ENCODE measurements at regions of chr19 and their contacts with region 1.

Region 1: GRCh38 chr19:54245936-54246335 is 3.3 kb upstream of the LILRA6 start:
- DNase-seq: no peak
- ATAC-seq: no peak
- H3K4me3 ChIP-seq: no peak overlapping the region
- H3K4me3 Mint-ChIP-seq: no peak overlapping the region
- H3K27ac ChIP-seq: no peak overlapping the region
- H3K27ac Mint-ChIP-seq: no peak overlapping the region
- H3K4me1 ChIP-seq: peaks cover 0 to 9% of the 10 kb centered on the region in 2 donors
- H3K4me1 Mint-ChIP-seq: peaks cover 7 to 12% (median 11%) of the 10 kb centered on the region in 7 donors
- H3K27me3 ChIP-seq: no peaks in the 10 kb centered on the region
- H3K27me3 Mint-ChIP-seq: peaks cover 0 to 6% (median 0%) of the 10 kb centered on the region in 5 donors

Region 2: DNA sequence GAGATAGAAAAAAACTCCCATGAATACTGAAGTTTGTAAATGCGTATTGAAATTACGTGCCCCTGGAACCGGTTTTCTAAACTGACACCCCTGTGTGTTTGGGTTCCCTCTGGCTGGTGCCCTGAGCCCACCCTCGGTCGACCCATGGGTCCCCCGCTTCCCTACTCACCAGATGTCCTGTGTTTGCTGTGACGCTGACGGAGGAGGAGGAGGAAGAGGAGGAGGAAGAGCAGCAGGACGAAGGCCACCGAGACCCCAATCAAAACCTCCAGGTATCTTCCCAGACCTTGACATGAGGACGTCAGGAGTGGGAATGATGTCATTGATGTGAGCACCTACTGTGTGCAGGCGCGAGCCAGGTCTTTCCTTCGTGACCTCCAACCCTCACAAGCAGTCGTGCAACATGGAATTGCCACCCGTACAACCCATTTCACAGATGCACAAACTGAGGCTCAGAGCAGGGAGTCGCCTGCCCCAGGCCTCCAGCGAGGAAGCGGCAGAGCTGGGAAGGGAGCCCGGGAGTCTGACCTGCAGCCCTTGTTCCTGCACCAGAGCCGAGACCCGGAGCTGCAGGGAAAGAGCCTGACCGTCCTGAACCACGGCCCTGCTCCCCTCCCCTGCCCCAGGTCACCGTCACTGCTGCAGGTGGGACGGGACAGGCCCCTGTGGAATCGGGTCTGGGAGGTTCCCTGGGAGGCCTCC is 26.8 kb before region 1 on chr19:
- CTCF ChIA-PET with region 1: no interaction called
- POLR2A ChIA-PET with region 1: no interaction called
- intact Hi-C with region 1: loop called in 1 of 2 experiments (anchors 2 kb)
- DNase-seq: no peak
- ATAC-seq: no peak
- H3K4me3 ChIP-seq: no peak overlapping the region
- H3K4me3 Mint-ChIP-seq: no peak overlapping the region
- H3K27ac ChIP-seq: no peak overlapping the region
- H3K27ac Mint-ChIP-seq: no peak overlapping the region
- H3K4me1 ChIP-seq: no peaks in the 10 kb centered on the region
- H3K4me1 Mint-ChIP-seq: peaks cover 0 to 10% (median 5%) of the 10 kb centered on the region in 7 donors
- H3K27me3 ChIP-seq: no peaks in the 10 kb centered on the region
- H3K27me3 Mint-ChIP-seq: peaks cover 0 to 16% (median 1%) of the 10 kb centered on the region in 5 donors